Activated naive CD4-positive, alpha-beta T cell treated with anti-CD3 and anti-CD28 coated beads for 36 hours (primary cell): ENCODE measurements at regions of chr4 and their contacts with region 1.

Region 1: GRCh38 chr4:37244583-37245390 is at the start of gene NWD2:
- DNase-seq: no peak
- H3K4me3 Mint-ChIP-seq: no peak within 1 kb of the TSS
- H3K27ac Mint-ChIP-seq: no peak within 1 kb of the TSS
- H3K4me1 Mint-ChIP-seq: peaks cover 6% of the 10 kb centered on the region
- H3K27me3 Mint-ChIP-seq: peaks cover 47% of the 10 kb centered on the region
- total RNA-seq, gene NWD2: not detected

Region 2: GRCh38 chr4:37138019-37138653 is 106.7 kb before region 1 on chr4:
- CTCF ChIA-PET with region 1: no interaction called
- intact Hi-C with region 1: loop called (anchors 5 kb)
- DNase-seq: no peak
- H3K4me3 Mint-ChIP-seq: no peak overlapping the region
- H3K27ac Mint-ChIP-seq: no peak overlapping the region
- H3K4me1 Mint-ChIP-seq: peaks cover 4% of the 10 kb centered on the region
- H3K27me3 Mint-ChIP-seq: peaks cover 2% of the 10 kb centered on the region

Region 3: DNA sequence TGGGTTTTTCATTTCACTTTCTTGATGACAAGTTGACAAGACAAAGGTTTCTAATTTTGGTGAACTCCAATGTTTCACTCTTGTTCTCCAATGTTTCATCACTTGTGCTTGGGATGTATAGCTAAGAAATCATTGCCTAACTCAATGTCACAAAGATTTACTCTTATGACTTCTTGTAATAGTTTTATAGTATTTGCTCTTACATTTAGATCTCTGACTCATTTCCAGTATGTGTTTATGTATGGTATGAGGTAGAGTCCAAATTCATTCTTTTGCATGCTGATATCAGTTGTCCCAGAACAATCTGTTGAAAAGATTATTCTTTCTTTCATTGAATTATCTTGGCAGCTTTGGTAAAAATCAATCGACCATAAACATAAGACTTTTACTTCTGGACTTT is 12.5 kb before region 1 on chr4:
- CTCF ChIA-PET with region 1: no interaction called
- intact Hi-C with region 1: no loop called
- DNase-seq: no peak
- H3K4me3 Mint-ChIP-seq: no peak overlapping the region
- H3K27ac Mint-ChIP-seq: no peak overlapping the region
- H3K4me1 Mint-ChIP-seq: no peaks in the 10 kb centered on the region
- H3K27me3 Mint-ChIP-seq: peaks cover 7% of the 10 kb centered on the region